ENCODE measurements at regions of chr5 and their contacts with region 1.

Region 1: DNA sequence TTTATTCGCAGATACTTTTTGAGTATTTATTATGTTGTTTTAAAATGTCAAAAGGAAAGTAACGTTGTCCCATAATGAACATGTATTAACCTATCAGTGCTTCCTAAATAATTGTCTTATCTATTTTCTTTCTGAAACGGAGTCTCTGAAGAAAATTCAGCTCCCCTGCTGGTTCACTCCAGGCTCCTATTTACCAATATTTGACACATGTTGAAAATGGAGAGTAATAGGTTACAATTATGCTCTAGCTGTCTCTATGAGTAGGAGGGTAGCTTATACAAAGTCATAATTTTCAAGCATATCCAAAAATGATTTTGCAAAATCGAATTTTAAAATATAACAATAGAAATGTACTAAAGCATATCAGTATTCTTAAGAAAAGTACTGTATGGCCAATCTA is 844.1 kb downstream of the CDH18 start:
- DNase-seq: no peak
- ATAC-seq: no peak
- H3K4me3 ChIP-seq: no peak overlapping the region
- H3K4me3 Mint-ChIP-seq: no peak overlapping the region
- H3K27ac ChIP-seq: no peak overlapping the region
- H3K27ac Mint-ChIP-seq: no peak overlapping the region
- H3K4me1 ChIP-seq: no peaks in the 10 kb centered on the region
- H3K4me1 Mint-ChIP-seq: no peaks in the 10 kb centered on the region
- H3K27me3 ChIP-seq: no peaks in the 10 kb centered on the region
- H3K27me3 Mint-ChIP-seq: no peaks in the 10 kb centered on the region
- CTCF ChIP-seq: no peak

Region 2: GRCh38 chr5:18920966-18921365 is 223.0 kb before region 1 on chr5:
- CTCF ChIA-PET with region 1: no interaction called
- POLR2A ChIA-PET with region 1: no interaction called
- intact Hi-C with region 1: no loop called
- DNase-seq: no peak
- ATAC-seq: no peak
- H3K4me3 ChIP-seq: no peak overlapping the region
- H3K4me3 Mint-ChIP-seq: no peak overlapping the region
- H3K27ac ChIP-seq: no peak overlapping the region
- H3K27ac Mint-ChIP-seq: no peak overlapping the region
- H3K4me1 ChIP-seq: no peaks in the 10 kb centered on the region
- H3K4me1 Mint-ChIP-seq: no peaks in the 10 kb centered on the region
- H3K27me3 ChIP-seq: no peaks in the 10 kb centered on the region
- H3K27me3 Mint-ChIP-seq: no peaks in the 10 kb centered on the region
- CTCF ChIP-seq: no peak

Region 3: GRCh38 chr5:18972177-18972576 is 171.8 kb before region 1 on chr5:
- CTCF ChIA-PET with region 1: no interaction called
- POLR2A ChIA-PET with region 1: no interaction called
- intact Hi-C with region 1: no loop called
- DNase-seq: no peak
- ATAC-seq: no peak
- H3K4me3 ChIP-seq: no peak overlapping the region
- H3K4me3 Mint-ChIP-seq: no peak overlapping the region
- H3K27ac ChIP-seq: no peak overlapping the region
- H3K27ac Mint-ChIP-seq: no peak overlapping the region
- H3K4me1 ChIP-seq: no peaks in the 10 kb centered on the region
- H3K4me1 Mint-ChIP-seq: no peaks in the 10 kb centered on the region
- H3K27me3 ChIP-seq: no peaks in the 10 kb centered on the region
- H3K27me3 Mint-ChIP-seq: no peaks in the 10 kb centered on the region
- CTCF ChIP-seq: no peak

Region 4: GRCh38 chr5:19048709-19049108 is 95.2 kb before region 1 on chr5:
- CTCF ChIA-PET with region 1: no interaction called
- POLR2A ChIA-PET with region 1: no interaction called
- intact Hi-C with region 1: no loop called
- DNase-seq: no peak
- ATAC-seq: no peak
- H3K4me3 ChIP-seq: no peak overlapping the region
- H3K4me3 Mint-ChIP-seq: no peak overlapping the region
- H3K27ac ChIP-seq: no peak overlapping the region
- H3K27ac Mint-ChIP-seq: no peak overlapping the region
- H3K4me1 ChIP-seq: no peaks in the 10 kb centered on the region
- H3K4me1 Mint-ChIP-seq: no peaks in the 10 kb centered on the region
- H3K27me3 ChIP-seq: no peaks in the 10 kb centered on the region
- H3K27me3 Mint-ChIP-seq: no peaks in the 10 kb centered on the region
- CTCF ChIP-seq: no peak

Region 5: GRCh38 chr5:19192180-19192579 is 48.2 kb after region 1 on chr5:
- CTCF ChIA-PET with region 1: no interaction called
- POLR2A ChIA-PET with region 1: no interaction called
- intact Hi-C with region 1: loop called in 1 of 2 experiments (anchors 1 kb)
- DNase-seq: no peak
- ATAC-seq: no peak
- H3K4me3 ChIP-seq: no peak overlapping the region
- H3K4me3 Mint-ChIP-seq: no peak overlapping the region
- H3K27ac ChIP-seq: no peak overlapping the region
- H3K27ac Mint-ChIP-seq: no peak overlapping the region
- H3K4me1 ChIP-seq: no peaks in the 10 kb centered on the region
- H3K4me1 Mint-ChIP-seq: no peaks in the 10 kb centered on the region
- H3K27me3 ChIP-seq: no peaks in the 10 kb centered on the region
- H3K27me3 Mint-ChIP-seq: no peaks in the 10 kb centered on the region
- CTCF ChIP-seq: no peak

Region 6: DNA sequence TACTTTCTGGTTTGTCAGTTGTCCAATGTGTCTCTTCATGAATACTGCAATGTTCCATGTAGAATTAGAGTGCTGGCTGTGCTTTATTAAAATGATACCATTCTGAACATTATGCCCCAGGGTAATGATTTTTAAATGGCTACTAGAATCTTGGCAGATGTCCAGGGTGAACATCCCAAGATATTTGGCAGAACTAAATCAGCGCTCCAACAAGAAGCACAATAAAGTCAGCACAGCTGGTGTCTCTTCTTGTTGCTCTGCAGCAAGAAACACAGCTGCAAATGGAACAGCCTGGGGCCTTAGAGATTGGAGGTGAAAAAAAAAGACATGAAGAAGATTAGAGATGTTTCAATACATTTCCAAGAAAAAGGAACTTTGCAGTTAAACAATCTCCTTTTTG is 595.7 kb after region 1 on chr5:
- CTCF ChIA-PET with region 1: no interaction called
- POLR2A ChIA-PET with region 1: no interaction called
- intact Hi-C with region 1: no loop called
- DNase-seq: no peak
- ATAC-seq: no peak
- H3K4me3 ChIP-seq: no peak overlapping the region
- H3K4me3 Mint-ChIP-seq: no peak overlapping the region
- H3K27ac ChIP-seq: no peak overlapping the region
- H3K27ac Mint-ChIP-seq: no peak overlapping the region
- H3K4me1 ChIP-seq: no peaks in the 10 kb centered on the region
- H3K4me1 Mint-ChIP-seq: no peaks in the 10 kb centered on the region
- H3K27me3 ChIP-seq: no peaks in the 10 kb centered on the region
- H3K27me3 Mint-ChIP-seq: no peaks in the 10 kb centered on the region
- CTCF ChIP-seq: no peak